ENCODE measurements at regions of chr9 and their contacts with region 1.

Region 1: GRCh38 chr9:95875305-95876137 is at the start of gene ERCC6L2:
- DNase-seq: peak; percentile 94 to 98 (median 96)
- H3K4me3 ChIP-seq: no peak within 1 kb of the TSS
- H3K27ac ChIP-seq: peak within 1 kb of the TSS; percentile 92 to 96
- H3K4me1 ChIP-seq: peaks cover 9% of the 10 kb centered on the region
- H3K27me3 ChIP-seq: no peaks in the 10 kb centered on the region
- CTCF ChIP-seq: peak in 2 of 3 donors; percentile 26 to 45
- EP300 ChIP-seq: no peak
- POLR2A ChIP-seq: peak; percentile 61
- total RNA-seq, gene ERCC6L2: 55.5 to 78.3 (median 60.5) TPM

Region 2: GRCh38 chr9:95508968-95509850 is 366.3 kb before region 1 on chr9:
- intact Hi-C with region 1: loop called in 1 of 4 experiments (anchors 10 kb)
- DNase-seq: peak; percentile 81 to 92 (median 85)
- H3K4me3 ChIP-seq: peak overlapping the region; percentile 72
- H3K27ac ChIP-seq: peak overlapping the region; percentile 82 to 86
- H3K4me1 ChIP-seq: peaks cover 4% of the 10 kb centered on the region
- H3K27me3 ChIP-seq: no peaks in the 10 kb centered on the region
- CTCF ChIP-seq: no peak
- EP300 ChIP-seq: no peak
- POLR2A ChIP-seq: no peak

Region 3: DNA sequence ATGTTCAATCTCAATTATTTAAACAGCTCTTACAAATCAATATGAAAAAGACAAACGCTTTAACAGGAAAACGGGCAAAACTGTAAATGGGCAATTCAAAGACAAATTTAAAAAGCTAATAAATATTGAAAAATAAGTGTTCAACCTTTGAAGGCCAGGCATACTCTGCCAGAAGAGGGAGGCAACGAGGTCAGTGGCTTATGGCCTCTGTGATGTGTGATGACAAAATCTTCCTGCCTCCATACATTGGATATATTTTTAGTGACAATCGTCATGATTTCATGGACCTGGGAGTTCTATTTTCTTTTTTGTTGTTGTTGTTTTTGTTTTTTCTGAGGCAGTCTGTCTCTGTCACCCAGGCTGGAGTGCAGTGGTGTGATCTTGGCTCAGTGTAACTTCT is 131.2 kb before region 1 on chr9:
- intact Hi-C with region 1: loop called in 1 of 4 experiments (anchors 10 kb)
- DNase-seq: no peak
- H3K4me3 ChIP-seq: no peak overlapping the region
- H3K27ac ChIP-seq: no peak overlapping the region
- H3K4me1 ChIP-seq: no peaks in the 10 kb centered on the region
- H3K27me3 ChIP-seq: no peaks in the 10 kb centered on the region
- CTCF ChIP-seq: no peak
- EP300 ChIP-seq: no peak
- POLR2A ChIP-seq: no peak

Region 4: GRCh38 chr9:95772320-95773052 is 103.0 kb before region 1 on chr9:
- intact Hi-C with region 1: loop called in 1 of 4 experiments (anchors 10 kb)
- DNase-seq: peak; percentile 74 to 84 (median 78)
- H3K4me3 ChIP-seq: no peak overlapping the region
- H3K27ac ChIP-seq: peak overlapping the region; percentile 54 to 75
- H3K4me1 ChIP-seq: peaks cover 23% of the 10 kb centered on the region
- H3K27me3 ChIP-seq: no peaks in the 10 kb centered on the region
- CTCF ChIP-seq: no peak
- EP300 ChIP-seq: no peak
- POLR2A ChIP-seq: no peak